Colonic mucosa (tissue), 4 donors: ENCODE measurements at regions of chr21 and their contacts with region 1.

Region 1: GRCh38 chr21:28516991-28517592 is 475.6 kb downstream of the LTN1 start:
- DNase-seq: peak; percentile 66
- H3K4me3 ChIP-seq: no peak overlapping the region
- H3K27ac ChIP-seq: no peak overlapping the region
- H3K4me1 ChIP-seq: no peaks in the 10 kb centered on the region
- H3K27me3 ChIP-seq: no peaks in the 10 kb centered on the region
- CTCF ChIP-seq: peak; percentile 59

Region 2: DNA sequence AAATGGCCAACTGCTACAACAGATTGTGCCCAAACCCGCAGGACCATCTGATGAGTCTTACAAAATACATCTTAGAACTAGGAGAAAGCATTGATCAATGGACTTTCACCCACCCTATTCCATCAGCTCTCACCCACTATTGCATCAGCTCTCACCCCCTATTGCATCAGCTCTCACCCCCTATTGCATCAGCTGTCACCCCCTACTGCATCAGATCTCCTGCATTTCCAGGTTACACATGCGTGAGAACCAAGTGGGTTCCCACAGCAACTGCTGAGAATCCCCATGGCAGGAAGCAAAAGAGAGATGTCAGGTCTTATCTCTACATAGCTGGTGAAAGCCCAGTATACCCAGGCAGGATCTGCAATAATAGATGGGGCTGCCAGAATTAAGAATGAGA is 57.9 kb before region 1 on chr21:
- intact Hi-C with region 1: no loop called
- DNase-seq: no peak
- H3K4me3 ChIP-seq: no peak overlapping the region
- H3K27ac ChIP-seq: no peak overlapping the region
- H3K4me1 ChIP-seq: no peaks in the 10 kb centered on the region
- H3K27me3 ChIP-seq: no peaks in the 10 kb centered on the region
- CTCF ChIP-seq: no peak

Region 3: GRCh38 chr21:28687571-28687970 is 170.5 kb after region 1 on chr21:
- intact Hi-C with region 1: no loop called
- DNase-seq: no peak
- H3K4me3 ChIP-seq: no peak overlapping the region
- H3K27ac ChIP-seq: no peak overlapping the region
- H3K4me1 ChIP-seq: no peaks in the 10 kb centered on the region
- H3K27me3 ChIP-seq: no peaks in the 10 kb centered on the region
- CTCF ChIP-seq: no peak

Region 4: GRCh38 chr21:28745131-28746016 is 228.3 kb after region 1 on chr21:
- intact Hi-C with region 1: loop called (anchors 5 kb)
- DNase-seq: peak; percentile 79
- H3K4me3 ChIP-seq: peak overlapping the region; percentile 47
- H3K27ac ChIP-seq: peak overlapping the region; percentile 47
- H3K4me1 ChIP-seq: no peaks in the 10 kb centered on the region
- H3K27me3 ChIP-seq: no peaks in the 10 kb centered on the region
- CTCF ChIP-seq: peak; percentile 81

Region 5: GRCh38 chr21:28943631-28944030 is 426.5 kb after region 1 on chr21:
- intact Hi-C with region 1: loop called (anchors 5 kb)
- DNase-seq: no peak
- H3K4me3 ChIP-seq: no peak overlapping the region
- H3K27ac ChIP-seq: no peak overlapping the region
- H3K4me1 ChIP-seq: no peaks in the 10 kb centered on the region
- H3K27me3 ChIP-seq: no peaks in the 10 kb centered on the region
- CTCF ChIP-seq: no peak